Activated CD4-positive, alpha-beta T cell treated with anti-CD3 and anti-CD28 coated beads for 36 hours (primary cell): ENCODE measurements at regions of chr16 and their contacts with region 1.

Region 1: GRCh38 chr16:17416461-17417311 is 54.1 kb downstream of the XYLT1 start:
- DNase-seq: peak; percentile 74
- ATAC-seq: peak; percentile 89
- H3K4me3 Mint-ChIP-seq: peak overlapping the region; percentile 69
- H3K27ac Mint-ChIP-seq: peak overlapping the region; percentile 93
- H3K4me1 Mint-ChIP-seq: peaks cover 50% of the 10 kb centered on the region
- H3K27me3 Mint-ChIP-seq: no peaks in the 10 kb centered on the region

Region 2: DNA sequence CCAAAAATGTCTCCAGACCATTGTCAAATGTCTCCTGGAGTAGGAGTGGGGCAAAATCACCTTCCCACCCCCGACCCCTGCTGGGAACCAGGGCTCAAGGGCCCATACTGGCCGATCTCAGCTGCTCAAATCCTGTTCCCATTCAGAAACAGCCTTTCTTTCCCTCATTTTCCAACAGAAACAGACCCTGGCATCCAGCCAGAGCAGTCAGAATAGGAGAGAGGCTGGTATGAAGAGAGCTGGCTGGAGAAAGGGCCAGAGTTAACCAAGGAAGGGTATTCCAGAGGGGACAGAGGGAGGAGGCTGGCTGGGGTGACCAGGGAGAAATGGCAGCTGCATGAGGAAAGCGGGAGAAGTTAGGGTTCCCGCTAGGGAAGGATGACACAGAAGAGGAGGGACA is 145.0 kb before region 1 on chr16:
- CTCF ChIA-PET with region 1: no interaction called
- POLR2A ChIA-PET with region 1: no interaction called
- intact Hi-C with region 1: loop called in 1 of 2 experiments (anchors 1 kb)
- DNase-seq: no peak
- ATAC-seq: no peak
- H3K4me3 Mint-ChIP-seq: no peak overlapping the region
- H3K27ac Mint-ChIP-seq: no peak overlapping the region
- H3K4me1 Mint-ChIP-seq: peaks cover 39% of the 10 kb centered on the region
- H3K27me3 Mint-ChIP-seq: no peaks in the 10 kb centered on the region

Region 3: GRCh38 chr16:17448640-17449638 is 32.3 kb after region 1 on chr16:
- CTCF ChIA-PET with region 1: no interaction called
- POLR2A ChIA-PET with region 1: no interaction called
- intact Hi-C with region 1: loop called in 1 of 2 experiments (anchors 1 kb)
- DNase-seq: peak; percentile 71
- ATAC-seq: peak; percentile 86
- H3K4me3 Mint-ChIP-seq: peak overlapping the region; percentile 26
- H3K27ac Mint-ChIP-seq: peak overlapping the region; percentile 66
- H3K4me1 Mint-ChIP-seq: peaks cover 36% of the 10 kb centered on the region
- H3K27me3 Mint-ChIP-seq: no peaks in the 10 kb centered on the region